ENCODE measurements at regions of chr17 and their contacts with region 1.

Region 1: DNA sequence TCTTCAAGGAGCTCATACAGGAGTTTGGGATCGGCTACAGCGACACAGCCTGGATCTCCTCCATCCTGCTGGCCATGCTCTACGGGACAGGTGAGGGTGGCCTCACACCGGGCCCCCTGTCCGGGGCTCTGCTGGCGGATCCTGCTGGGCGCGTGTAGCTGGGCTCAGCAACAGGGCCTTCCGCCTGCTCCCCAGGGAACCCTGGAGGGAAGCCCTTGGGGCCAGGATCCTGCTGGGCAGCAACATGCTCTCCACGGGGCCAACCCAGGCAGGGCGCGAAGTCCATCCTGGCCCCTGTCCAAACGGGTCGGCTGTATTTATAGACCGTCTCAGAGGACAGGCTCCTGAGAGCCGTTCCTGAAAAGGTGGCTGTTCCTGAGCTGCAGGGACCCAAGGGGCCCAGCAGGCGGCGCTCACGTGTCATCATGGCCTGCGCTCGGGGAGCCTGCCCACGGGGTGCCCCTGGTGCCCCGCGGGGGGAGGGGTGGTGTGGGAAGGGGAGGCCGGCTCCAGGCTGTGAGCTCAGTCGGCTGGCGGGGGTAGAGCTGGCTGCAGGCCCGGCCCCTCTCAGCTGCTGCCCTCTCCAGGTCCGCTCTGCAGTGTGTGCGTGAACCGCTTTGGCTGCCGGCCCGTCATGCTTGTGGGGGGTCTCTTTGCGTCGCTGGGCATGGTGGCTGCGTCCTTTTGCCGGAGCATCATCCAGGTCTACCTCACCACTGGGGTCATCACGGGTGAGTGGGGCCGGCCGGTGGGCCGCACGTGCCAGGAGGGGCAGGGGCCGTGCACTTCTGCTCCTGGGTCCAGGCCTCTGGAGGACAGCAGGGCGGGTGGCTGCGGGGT is 7.5 kb downstream of the SLC16A3 start:
- DNase-seq: no peak

Region 2: DNA sequence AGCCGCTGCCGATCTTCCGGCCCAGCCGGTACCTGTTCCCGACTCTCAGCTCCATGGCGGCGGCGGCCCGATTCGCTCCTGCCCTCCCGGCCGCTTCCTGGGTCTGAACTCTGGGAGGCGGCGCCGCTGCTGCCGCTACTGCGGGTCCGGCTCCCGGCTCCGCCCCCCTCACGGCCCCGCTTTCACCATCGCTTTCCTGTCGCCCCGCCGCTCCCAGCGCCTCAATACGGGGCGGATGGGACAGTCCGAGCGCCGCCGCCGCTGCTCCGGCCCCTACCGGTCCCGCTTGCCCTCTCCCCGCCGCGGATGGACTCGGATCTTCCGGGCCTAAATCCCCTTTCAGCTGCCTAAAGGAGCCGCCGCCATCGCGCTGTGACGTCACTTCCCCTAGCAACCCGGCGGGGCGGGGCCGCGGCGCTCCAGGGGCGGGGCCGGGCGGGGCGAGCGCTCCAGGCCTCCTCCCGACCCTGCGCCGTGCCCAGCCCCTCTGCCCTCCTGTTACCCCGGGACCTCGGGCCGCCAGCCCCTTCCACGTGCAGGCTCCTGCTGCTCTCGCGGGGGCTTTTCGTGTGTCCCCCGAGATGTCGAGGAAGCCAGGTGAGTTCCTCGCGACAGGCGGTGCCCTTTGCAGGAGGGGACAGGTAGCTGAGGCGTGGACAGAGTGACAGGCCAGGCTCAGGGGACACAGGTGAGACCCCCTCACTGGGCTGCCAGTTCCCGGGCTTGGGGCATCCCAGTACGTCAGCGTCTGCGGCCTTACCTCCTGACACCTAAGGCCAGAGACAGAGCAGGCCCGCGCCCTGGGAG is 37.2 kb after region 1 on chr17 and contains the start of gene CSNK1D:
- intact Hi-C with region 1: loop called (anchors 5 kb)
- DNase-seq: peak; percentile 96
- total RNA-seq, gene CSNK1D: 80.9 TPM

Region 3: GRCh38 chr17:82297714-82298537 is 61.6 kb after region 1 on chr17:
- intact Hi-C with region 1: loop called (anchors 2 kb)
- DNase-seq: peak; percentile 95

Region 4: DNA sequence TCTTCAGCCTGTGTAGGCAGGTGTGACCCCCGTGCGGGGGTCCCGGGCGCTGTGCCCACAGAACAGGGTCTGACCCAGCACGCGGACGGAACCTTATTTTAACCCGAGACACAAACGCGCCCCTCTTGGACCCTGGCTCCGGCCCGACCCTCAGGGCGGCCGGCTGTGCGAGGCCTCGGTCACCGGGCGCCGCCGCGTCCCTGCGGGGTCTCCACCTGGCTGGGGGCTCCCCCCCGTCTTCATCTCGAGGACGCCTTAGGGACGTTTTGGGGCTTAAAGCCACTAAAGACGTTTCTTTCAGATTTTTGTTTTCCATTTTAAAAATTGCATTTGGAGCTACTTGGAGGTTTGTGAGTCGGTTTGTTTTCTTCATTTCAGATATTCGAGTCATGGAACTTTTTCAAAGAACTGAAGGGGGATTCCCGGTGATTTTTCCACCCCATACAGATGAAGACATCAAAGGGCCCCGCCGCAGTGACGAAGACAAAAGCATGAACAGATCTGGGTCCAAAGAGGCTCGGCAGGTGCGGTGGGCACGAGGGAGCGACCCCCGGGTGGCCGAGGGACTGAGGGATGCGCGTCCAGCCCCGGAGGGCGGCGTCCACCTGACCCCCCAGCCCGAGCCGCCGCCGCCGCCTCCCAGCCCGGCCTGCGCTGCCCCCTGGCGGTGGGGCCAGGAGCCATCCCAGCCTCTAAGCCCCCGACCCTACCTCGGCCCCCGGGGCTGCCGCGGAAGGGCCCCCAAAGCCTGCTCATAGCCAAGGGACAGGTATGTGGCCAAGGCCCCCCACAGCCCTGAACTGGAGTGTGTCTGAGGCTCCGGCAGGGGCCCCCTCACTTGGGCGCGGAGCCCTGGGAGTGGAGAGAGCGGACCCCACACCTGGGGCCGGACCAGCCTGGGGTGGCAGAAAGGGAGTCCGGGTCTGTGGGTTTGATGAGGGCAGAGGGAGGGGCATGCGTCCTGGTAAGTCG is 84.9 kb after region 1 on chr17:
- intact Hi-C with region 1: loop called (anchors 2 kb)
- DNase-seq: no peak

Region 5: GRCh38 chr17:82351716-82352488 is 115.5 kb after region 1 on chr17:
- intact Hi-C with region 1: no loop called
- DNase-seq: peak; percentile 90